Breast epithelium (tissue), 4 donors: ENCODE measurements at regions of chr4 and their contacts with region 1.

Region 1: GRCh38 chr4:101858545-101858944 is 68.0 kb downstream of the BANK1 start:
- DNase-seq: no peak
- H3K4me3 ChIP-seq: no peak overlapping the region
- H3K27ac ChIP-seq: no peak overlapping the region
- H3K4me1 ChIP-seq: no peaks in the 10 kb centered on the region
- H3K27me3 ChIP-seq: no peaks in the 10 kb centered on the region
- CTCF ChIP-seq: no peak
- POLR2A ChIP-seq: no peak

Region 2: GRCh38 chr4:101500742-101501141 is 357.8 kb before region 1 on chr4:
- intact Hi-C with region 1: no loop called
- DNase-seq: no peak
- H3K4me3 ChIP-seq: no peak overlapping the region
- H3K27ac ChIP-seq: no peak overlapping the region
- H3K4me1 ChIP-seq: no peaks in the 10 kb centered on the region
- H3K27me3 ChIP-seq: no peaks in the 10 kb centered on the region
- CTCF ChIP-seq: no peak
- POLR2A ChIP-seq: no peak

Region 3: DNA sequence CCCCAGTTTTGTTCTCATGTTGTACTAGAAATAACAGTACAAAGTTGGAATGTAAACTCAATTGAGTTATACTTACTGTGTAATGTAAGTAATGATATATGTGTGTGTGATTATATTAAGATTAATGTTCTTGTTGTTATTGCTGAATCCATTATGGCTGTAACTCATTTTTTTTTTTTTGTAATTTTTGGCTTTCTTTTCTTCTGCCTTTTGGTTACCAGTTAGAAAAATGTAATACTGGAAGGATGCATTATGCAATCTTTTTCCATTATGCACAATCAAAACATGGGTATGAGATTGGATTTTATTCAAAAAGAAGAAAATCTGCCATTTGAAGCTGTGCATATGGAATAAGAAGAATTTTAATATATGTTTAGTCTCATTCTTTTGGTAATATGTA is 34.0 kb before region 1 on chr4:
- intact Hi-C with region 1: no loop called
- DNase-seq: no peak
- H3K4me3 ChIP-seq: no peak overlapping the region
- H3K27ac ChIP-seq: no peak overlapping the region
- H3K4me1 ChIP-seq: no peaks in the 10 kb centered on the region
- H3K27me3 ChIP-seq: no peaks in the 10 kb centered on the region
- CTCF ChIP-seq: no peak
- POLR2A ChIP-seq: no peak

Region 4: GRCh38 chr4:101871962-101872690 is 13.6 kb after region 1 on chr4:
- intact Hi-C with region 1: loop called (anchors 1 kb)
- DNase-seq: no peak
- H3K4me3 ChIP-seq: no peak overlapping the region
- H3K27ac ChIP-seq: no peak overlapping the region
- H3K4me1 ChIP-seq: no peaks in the 10 kb centered on the region
- H3K27me3 ChIP-seq: no peaks in the 10 kb centered on the region
- CTCF ChIP-seq: no peak
- POLR2A ChIP-seq: no peak